PC-9 (cell line): ENCODE measurements at regions of chr3 and their contacts with region 1.

Region 1: GRCh38 chr3:194573691-194574437 is 59.4 kb downstream of the TMEM44 start:
- DNase-seq: peak in 1 of 2 experiments; percentile 29
- H3K4me3 ChIP-seq: no peak overlapping the region
- H3K27ac ChIP-seq: no peak overlapping the region
- H3K4me1 ChIP-seq: peaks cover 71% of the 10 kb centered on the region
- H3K27me3 ChIP-seq: no peaks in the 10 kb centered on the region
- CTCF ChIP-seq: peak; percentile 63

Region 2: GRCh38 chr3:194472290-194472920 is 101.5 kb before region 1 on chr3:
- CTCF ChIA-PET with region 1: interaction called, 7 read pairs
- POLR2A ChIA-PET with region 1: interaction called, 8 read pairs
- intact Hi-C with region 1: loop called (anchors 1 kb)
- DNase-seq: peak; percentile 31 to 67
- H3K4me3 ChIP-seq: no peak overlapping the region
- H3K27ac ChIP-seq: no peak overlapping the region
- H3K4me1 ChIP-seq: no peaks in the 10 kb centered on the region
- H3K27me3 ChIP-seq: no peaks in the 10 kb centered on the region
- CTCF ChIP-seq: peak; percentile 98

Region 3: GRCh38 chr3:194512895-194513601 is 60.8 kb before region 1 on chr3:
- CTCF ChIA-PET with region 1: no interaction called
- POLR2A ChIA-PET with region 1: no interaction called
- intact Hi-C with region 1: loop called (anchors 1 kb)
- DNase-seq: peak; percentile 96 to 99
- H3K4me3 ChIP-seq: no peak overlapping the region
- H3K27ac ChIP-seq: peak overlapping the region; percentile 56
- H3K4me1 ChIP-seq: peaks cover 45% of the 10 kb centered on the region
- H3K27me3 ChIP-seq: no peaks in the 10 kb centered on the region
- CTCF ChIP-seq: no peak

Region 4: GRCh38 chr3:194536871-194537637 is 36.8 kb before region 1 on chr3:
- CTCF ChIA-PET with region 1: interaction called, 3 read pairs
- POLR2A ChIA-PET with region 1: no interaction called
- intact Hi-C with region 1: loop called (anchors 5 kb)
- DNase-seq: peak; percentile 69 to 79
- H3K4me3 ChIP-seq: peak overlapping the region; percentile 9; the same call in 1 of the 2 replicates
- H3K27ac ChIP-seq: peak overlapping the region; percentile 86
- H3K4me1 ChIP-seq: peaks cover 38% of the 10 kb centered on the region
- H3K27me3 ChIP-seq: no peaks in the 10 kb centered on the region
- CTCF ChIP-seq: no peak

Region 5: GRCh38 chr3:194561306-194561974 is 12.4 kb before region 1 on chr3:
- CTCF ChIA-PET with region 1: interaction called, 3 read pairs
- POLR2A ChIA-PET with region 1: interaction called, 3 read pairs
- intact Hi-C with region 1: loop called (anchors 1 kb)
- DNase-seq: peak; percentile 69 to 96
- H3K4me3 ChIP-seq: no peak overlapping the region
- H3K27ac ChIP-seq: peak overlapping the region; percentile 69
- H3K4me1 ChIP-seq: peaks cover 17% of the 10 kb centered on the region
- H3K27me3 ChIP-seq: no peaks in the 10 kb centered on the region
- CTCF ChIP-seq: no peak